PC-3 (cell line): ENCODE measurements at regions of chr14 and their contacts with region 1.

Region 1: DNA sequence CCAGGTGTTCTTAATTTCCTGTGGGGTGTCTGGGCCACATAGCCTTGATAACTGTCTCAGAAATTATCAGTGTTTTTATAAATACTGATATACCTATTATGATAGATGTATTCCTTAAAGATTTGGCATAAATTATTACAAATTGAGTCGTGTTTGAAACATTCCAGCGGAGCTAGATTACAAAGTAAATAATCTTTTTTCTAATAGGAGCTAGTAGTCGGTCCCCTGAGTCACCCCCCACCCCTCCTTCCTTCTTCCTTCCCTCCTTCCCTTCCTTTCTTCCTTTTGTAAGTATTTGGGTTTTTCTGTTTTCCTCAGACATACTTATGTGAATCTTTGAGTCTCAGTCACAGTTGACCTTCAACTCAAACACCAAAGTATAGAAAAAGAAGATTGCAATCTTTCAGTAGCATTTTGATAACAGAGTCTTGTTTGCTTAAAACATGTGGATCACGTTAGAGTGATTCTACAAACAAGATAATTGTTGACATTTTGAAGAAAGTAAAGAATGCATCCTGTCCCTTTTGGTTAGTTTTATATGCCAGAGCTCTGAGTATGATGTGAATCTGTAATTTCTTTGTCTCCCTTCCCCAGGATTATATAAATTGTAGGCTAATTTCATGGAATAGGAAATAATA is 263.9 kb downstream of the FUT8 start:
- DNase-seq: peak; percentile 41
- ATAC-seq: peak; percentile 80
- H3K4me3 ChIP-seq: peak overlapping the region; percentile 44
- H3K27ac ChIP-seq: peak overlapping the region; percentile 16; the same call in 1 of the 2 replicates
- H3K4me1 ChIP-seq: peaks cover 14% of the 10 kb centered on the region
- H3K27me3 ChIP-seq: no peaks in the 10 kb centered on the region
- CTCF ChIP-seq: no peak

Region 2: DNA sequence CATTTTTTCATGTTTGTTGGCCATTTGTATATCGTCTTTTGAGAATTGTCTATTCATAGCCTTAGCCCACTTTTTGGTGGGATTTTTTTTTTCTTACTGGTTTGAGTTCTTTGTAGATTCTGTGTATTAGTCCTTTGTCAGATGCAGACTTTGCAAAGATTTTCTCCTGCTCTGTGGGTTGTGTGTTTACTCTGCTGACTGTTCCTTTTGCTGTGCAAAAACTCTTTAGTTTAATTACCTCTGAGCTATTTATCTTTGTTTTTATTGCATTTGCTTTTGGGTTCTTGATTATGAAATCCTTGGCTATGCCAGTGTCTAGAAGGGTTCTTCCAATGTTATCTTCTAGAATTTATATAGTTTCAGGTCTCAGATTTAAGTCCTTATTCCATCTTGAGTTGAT is 44.0 kb before region 1 on chr14:
- CTCF ChIA-PET with region 1: no interaction called
- POLR2A ChIA-PET with region 1: no interaction called
- intact Hi-C with region 1: loop called (anchors 2 kb)
- DNase-seq: no peak
- ATAC-seq: peak; percentile 84
- H3K4me3 ChIP-seq: no peak overlapping the region
- H3K27ac ChIP-seq: no peak overlapping the region
- H3K4me1 ChIP-seq: no peaks in the 10 kb centered on the region
- H3K27me3 ChIP-seq: no peaks in the 10 kb centered on the region
- CTCF ChIP-seq: no peak

Region 3: GRCh38 chr14:65686761-65687160 is 10.3 kb after region 1 on chr14:
- CTCF ChIA-PET with region 1: no interaction called
- POLR2A ChIA-PET with region 1: interaction called, 10 read pairs
- intact Hi-C with region 1: no loop called
- DNase-seq: peak; percentile 18
- ATAC-seq: peak; percentile 40; the same call in 1 of the 2 replicates
- H3K4me3 ChIP-seq: no peak overlapping the region
- H3K27ac ChIP-seq: no peak overlapping the region
- H3K4me1 ChIP-seq: no peaks in the 10 kb centered on the region
- H3K27me3 ChIP-seq: no peaks in the 10 kb centered on the region
- CTCF ChIP-seq: no peak

Region 4: GRCh38 chr14:65738339-65738738 is 61.9 kb after region 1 on chr14:
- CTCF ChIA-PET with region 1: no interaction called
- POLR2A ChIA-PET with region 1: no interaction called
- intact Hi-C with region 1: loop called (anchors 2 kb)
- DNase-seq: no peak
- ATAC-seq: peak; percentile 65
- H3K4me3 ChIP-seq: no peak overlapping the region
- H3K27ac ChIP-seq: no peak overlapping the region
- H3K4me1 ChIP-seq: no peaks in the 10 kb centered on the region
- H3K27me3 ChIP-seq: no peaks in the 10 kb centered on the region
- CTCF ChIP-seq: no peak

Region 5: GRCh38 chr14:65776193-65776852 is 99.8 kb after region 1 on chr14:
- CTCF ChIA-PET with region 1: no interaction called
- POLR2A ChIA-PET with region 1: no interaction called
- intact Hi-C with region 1: loop called (anchors 5 kb)
- DNase-seq: no peak
- ATAC-seq: peak; percentile 51
- H3K4me3 ChIP-seq: no peak overlapping the region
- H3K27ac ChIP-seq: no peak overlapping the region
- H3K4me1 ChIP-seq: peaks cover 15% of the 10 kb centered on the region
- H3K27me3 ChIP-seq: no peaks in the 10 kb centered on the region
- CTCF ChIP-seq: no peak

Region 6: DNA sequence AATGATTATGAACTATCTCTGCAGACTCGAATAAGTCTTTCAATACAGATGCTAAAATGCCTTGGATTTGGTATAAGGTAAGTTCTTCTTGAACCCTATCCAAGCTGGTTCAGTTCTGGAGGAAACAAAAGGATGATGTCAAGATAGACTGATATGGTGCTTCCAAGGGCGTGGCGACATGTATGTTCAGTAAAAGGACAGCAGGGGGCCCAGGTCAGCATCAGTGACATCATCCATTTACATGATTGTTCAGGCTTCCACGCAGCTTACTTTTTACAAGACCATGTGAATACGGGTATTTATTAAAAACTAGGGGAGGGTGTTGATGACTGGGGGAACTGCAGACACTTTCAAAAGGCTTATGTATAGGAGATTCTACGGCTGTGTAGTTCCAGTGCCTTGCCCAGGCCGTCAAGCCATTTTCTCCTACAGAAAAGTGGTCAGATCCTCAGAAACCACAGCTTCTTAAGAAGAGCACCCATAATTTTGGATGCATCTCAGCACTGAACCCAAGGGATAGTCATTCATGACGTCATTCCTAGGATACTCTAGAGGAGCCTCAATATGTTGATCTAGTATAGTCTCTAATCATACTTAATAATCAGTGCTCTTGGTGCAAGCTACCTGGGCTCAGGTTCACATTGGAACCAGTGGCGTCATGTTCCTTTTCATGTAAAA is 263.7 kb after region 1 on chr14:
- CTCF ChIA-PET with region 1: no interaction called
- POLR2A ChIA-PET with region 1: no interaction called
- intact Hi-C with region 1: no loop called
- DNase-seq: peak; percentile 38
- ATAC-seq: peak; percentile 60
- H3K4me3 ChIP-seq: no peak overlapping the region
- H3K27ac ChIP-seq: no peak overlapping the region
- H3K4me1 ChIP-seq: no peaks in the 10 kb centered on the region
- H3K27me3 ChIP-seq: peaks cover 29% of the 10 kb centered on the region
- CTCF ChIP-seq: peak; percentile 55; the same call in 1 of the 2 replicates